Calu3 (cell line): ENCODE measurements at regions of chr5 and their contacts with region 1.

Region 1: GRCh38 chr5:71697967-71698366 is 21.1 kb upstream of the CARTPT start:
- DNase-seq: no peak
- H3K4me3 Mint-ChIP-seq: no peak overlapping the region
- H3K27ac Mint-ChIP-seq: no peak overlapping the region
- H3K4me1 Mint-ChIP-seq: peaks cover 42% of the 10 kb centered on the region
- H3K27me3 Mint-ChIP-seq: no peaks in the 10 kb centered on the region
- CTCF ChIP-seq: peak; percentile 31

Region 2: DNA sequence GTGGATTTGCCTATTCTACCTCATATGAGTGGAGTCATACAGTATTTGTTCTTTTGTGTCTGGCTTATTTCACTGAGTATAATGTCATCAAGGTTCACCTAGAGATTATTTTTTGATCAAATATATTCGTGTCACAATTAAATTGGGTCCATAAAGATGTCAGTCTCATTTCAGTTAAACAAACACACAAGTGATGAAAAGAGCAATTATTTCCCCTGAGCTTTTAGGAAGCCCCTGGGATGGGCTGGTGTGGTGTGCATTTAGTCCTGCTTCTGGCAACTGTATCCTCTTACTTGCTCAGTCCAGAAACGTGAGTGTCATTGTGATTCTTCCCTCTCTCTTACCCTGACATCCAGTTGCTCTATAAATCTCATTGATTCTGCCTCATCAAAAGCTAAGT is 31.6 kb before region 1 on chr5:
- CTCF ChIA-PET with region 1: no interaction called
- intact Hi-C with region 1: no loop called
- DNase-seq: no peak
- H3K4me3 Mint-ChIP-seq: no peak overlapping the region
- H3K27ac Mint-ChIP-seq: peak overlapping the region; percentile 23
- H3K4me1 Mint-ChIP-seq: peaks cover 37% of the 10 kb centered on the region
- H3K27me3 Mint-ChIP-seq: no peaks in the 10 kb centered on the region
- CTCF ChIP-seq: no peak

Region 3: GRCh38 chr5:71751422-71751821 is 53.5 kb after region 1 on chr5:
- CTCF ChIA-PET with region 1: no interaction called
- intact Hi-C with region 1: loop called (anchors 5 kb)
- DNase-seq: no peak
- H3K4me3 Mint-ChIP-seq: no peak overlapping the region
- H3K27ac Mint-ChIP-seq: peak overlapping the region; percentile 33
- H3K4me1 Mint-ChIP-seq: peaks cover 49% of the 10 kb centered on the region
- H3K27me3 Mint-ChIP-seq: no peaks in the 10 kb centered on the region
- CTCF ChIP-seq: no peak